A673 (cell line): ENCODE measurements at regions of chr1 and their contacts with region 1.

Region 1: DNA sequence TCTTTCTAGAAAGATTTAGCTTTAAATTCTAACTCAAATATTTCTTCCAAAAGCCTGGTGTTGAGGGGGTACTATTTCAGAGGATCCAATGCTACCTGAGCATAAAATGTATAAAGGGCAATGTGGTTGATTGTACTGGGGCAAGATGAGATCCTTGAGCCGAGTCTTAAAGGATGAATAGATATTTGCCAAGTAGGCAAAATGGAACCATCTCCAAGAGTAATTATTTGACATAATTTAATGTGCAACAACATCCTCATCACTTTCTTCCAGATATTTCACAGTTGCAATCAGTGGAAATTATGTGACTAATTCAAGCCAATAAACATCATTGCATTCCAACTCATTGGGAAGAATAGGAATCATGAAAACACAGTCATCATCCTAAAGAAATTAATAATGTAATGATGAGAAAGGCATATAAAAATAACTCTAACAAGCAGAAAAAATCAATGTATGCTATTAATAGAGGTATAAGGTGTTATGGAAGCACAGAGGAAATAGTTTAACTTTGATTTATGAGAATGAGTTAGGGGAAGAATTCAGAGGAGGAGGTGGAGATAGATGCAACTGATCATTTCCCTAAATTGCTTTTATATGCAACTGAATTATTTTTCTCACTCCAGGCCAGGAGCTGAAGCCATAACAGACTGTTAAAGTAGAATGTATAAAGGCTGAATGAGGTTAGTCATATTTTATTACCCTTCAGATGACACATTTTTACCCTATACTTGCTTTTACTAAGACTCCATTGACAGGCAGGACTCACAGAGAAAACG is 30.0 kb upstream of the RGS4 start:
- DNase-seq: no peak
- H3K4me3 ChIP-seq: no peak overlapping the region
- H3K27ac ChIP-seq: no peak overlapping the region
- H3K4me1 ChIP-seq: peaks cover 15% of the 10 kb centered on the region
- H3K27me3 ChIP-seq: no peaks in the 10 kb centered on the region
- CTCF ChIP-seq: no peak

Region 2: DNA sequence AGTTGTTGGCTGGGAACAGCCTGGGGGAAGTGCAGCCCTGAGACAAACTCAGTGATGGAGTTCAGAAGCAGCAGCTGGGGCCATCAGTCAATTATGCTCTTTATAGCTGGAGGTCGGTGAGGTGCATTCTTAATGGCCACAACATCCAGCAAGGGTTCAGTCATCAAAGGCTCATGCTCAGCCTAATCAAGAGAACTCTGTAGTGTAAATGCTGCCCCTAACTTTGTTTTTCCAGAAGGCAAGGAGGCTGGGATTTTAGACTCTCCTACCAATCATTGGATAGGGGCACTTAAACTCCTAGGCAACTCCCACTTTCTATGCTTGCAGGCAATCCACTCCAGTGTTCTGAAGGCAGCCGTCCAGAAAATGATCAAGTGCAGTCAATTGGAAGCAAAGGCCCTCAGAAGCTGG is 15.1 kb after region 1 on chr1:
- CTCF ChIA-PET with region 1: no interaction called
- POLR2A ChIA-PET with region 1: no interaction called
- intact Hi-C with region 1: loop called (anchors 2 kb)
- DNase-seq: peak; percentile 45
- H3K4me3 ChIP-seq: no peak overlapping the region
- H3K27ac ChIP-seq: peak overlapping the region; percentile 75
- H3K4me1 ChIP-seq: peaks cover 29% of the 10 kb centered on the region
- H3K27me3 ChIP-seq: no peaks in the 10 kb centered on the region
- CTCF ChIP-seq: no peak